GM12878 (cell line): ENCODE measurements at regions of chr16 and their contacts with region 1.

Region 1: DNA sequence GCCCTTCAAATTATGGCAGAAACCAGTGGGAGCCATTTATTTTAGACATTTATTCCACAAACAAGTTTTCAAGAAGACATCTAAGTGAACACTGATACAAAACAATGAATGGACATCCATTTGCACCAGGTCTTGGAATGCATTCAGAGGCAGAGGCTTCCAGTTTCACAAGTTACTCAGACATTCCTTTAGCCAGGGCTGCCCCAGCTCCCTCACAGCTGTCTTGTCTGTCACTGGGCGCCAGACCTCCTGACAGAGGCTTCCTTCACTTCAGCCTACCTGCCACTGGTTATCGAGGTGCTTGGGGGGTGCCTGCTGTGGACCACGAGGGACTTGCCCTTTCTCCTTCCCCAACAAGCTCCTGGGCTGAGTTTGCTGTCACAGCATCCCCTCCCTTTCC is 19.2 kb downstream of the AQP8 start:
- DNase-seq: no peak
- ATAC-seq: no peak
- H3K4me3 ChIP-seq: no peak overlapping the region
- H3K27ac ChIP-seq: no peak overlapping the region
- H3K4me1 ChIP-seq: no peaks in the 10 kb centered on the region
- H3K27me3 ChIP-seq: no peaks in the 10 kb centered on the region; a peak in 1 of 4 replicates
- CTCF ChIP-seq: no peak
- EP300 ChIP-seq: no peak
- POLR2A ChIP-seq: no peak
- RAD21 ChIP-seq: no peak

Region 2: DNA sequence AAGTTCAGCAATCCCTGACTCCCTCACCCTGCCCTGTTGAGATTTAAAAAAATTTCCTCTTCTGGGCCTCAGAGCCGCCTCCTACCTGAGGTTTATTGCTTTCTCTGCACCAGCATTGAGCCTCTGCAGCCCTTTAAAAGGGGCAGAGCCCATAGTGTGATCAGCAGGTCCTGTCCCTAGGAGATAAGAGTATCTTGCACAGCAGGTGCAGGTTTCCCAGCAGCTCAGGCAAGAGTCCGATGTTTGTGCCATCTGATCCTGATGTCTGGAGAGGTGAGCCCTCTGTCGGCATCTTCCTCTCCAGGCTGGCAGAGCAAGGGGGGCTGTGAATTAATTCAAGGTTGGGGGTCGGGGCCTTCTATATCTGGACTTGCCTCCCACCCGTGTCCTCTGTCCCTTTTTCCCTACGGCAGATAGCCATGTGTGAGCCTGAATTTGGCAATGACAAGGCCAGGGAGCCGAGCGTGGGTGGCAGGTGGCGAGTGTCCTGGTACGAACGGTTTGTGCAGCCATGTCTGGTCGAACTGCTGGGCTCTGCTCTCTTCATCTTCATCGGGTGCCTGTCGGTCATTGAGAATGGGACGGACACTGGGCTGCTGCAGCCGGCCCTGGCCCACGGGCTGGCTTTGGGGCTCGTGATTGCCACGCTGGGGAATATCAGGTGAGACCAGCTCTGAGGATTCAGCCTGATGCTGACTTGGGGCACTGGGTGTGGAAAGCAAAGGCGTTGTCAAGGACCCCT is 19.0 kb before region 1 on chr16 and contains the start of gene AQP8:
- CTCF ChIA-PET with region 1: interaction called, 16 read pairs
- POLR2A ChIA-PET with region 1: no interaction called
- RAD21 ChIA-PET with region 1: no interaction called
- SMC1A ChIA-PET with region 1: no interaction called
- in situ Hi-C with region 1: no loop called
- intact Hi-C with region 1: no loop called
- DNase-seq: no peak
- ATAC-seq: no peak
- H3K4me3 ChIP-seq: no peak within 1 kb of the TSS
- H3K27ac ChIP-seq: no peak within 1 kb of the TSS
- H3K4me1 ChIP-seq: no peaks in the 10 kb centered on the region
- H3K27me3 ChIP-seq: peaks cover 0 to 1% of the 10 kb centered on the region in 2 experiments; a peak in 1 of 4 replicates
- CTCF ChIP-seq: no peak
- EP300 ChIP-seq: no peak
- POLR2A ChIP-seq: no peak
- RAD21 ChIP-seq: no peak
- polyA plus RNA-seq, gene AQP8: not detected

Region 3: DNA sequence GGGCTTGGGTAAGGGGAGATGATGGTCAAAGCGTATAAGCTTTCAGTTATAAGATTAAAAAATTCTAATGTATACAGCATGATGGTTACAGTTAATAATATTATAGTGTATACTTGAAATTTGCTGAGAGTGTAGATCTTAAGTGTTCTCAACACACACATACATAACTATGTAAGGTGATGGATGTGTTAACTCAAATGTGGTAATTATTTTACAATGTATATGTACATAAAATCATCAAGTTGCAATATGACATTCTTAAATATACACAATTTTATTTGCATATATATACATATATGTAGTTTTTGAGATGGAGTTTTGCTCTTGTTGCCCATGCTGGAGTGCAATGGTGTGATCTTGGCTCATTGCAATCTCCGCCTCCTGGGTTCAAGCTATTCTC is 14.5 kb after region 1 on chr16:
- CTCF ChIA-PET with region 1: interaction called, 12 read pairs
- POLR2A ChIA-PET with region 1: no interaction called
- RAD21 ChIA-PET with region 1: no interaction called
- SMC1A ChIA-PET with region 1: interaction called, 5 read pairs
- in situ Hi-C with region 1: no loop called
- intact Hi-C with region 1: no loop called
- DNase-seq: no peak
- ATAC-seq: no peak
- H3K4me3 ChIP-seq: no peak overlapping the region
- H3K27ac ChIP-seq: no peak overlapping the region
- H3K4me1 ChIP-seq: no peaks in the 10 kb centered on the region
- H3K27me3 ChIP-seq: no peaks in the 10 kb centered on the region
- CTCF ChIP-seq: no peak
- EP300 ChIP-seq: no peak
- POLR2A ChIP-seq: no peak
- RAD21 ChIP-seq: no peak